ENCODE measurements at regions of chr6 and their contacts with region 1.

Region 1: GRCh38 chr6:56595490-56596122 is 47.1 kb downstream of the DST start:
- DNase-seq: peak in 1 of 2 experiments; percentile 52
- H3K4me3 ChIP-seq: no peak overlapping the region
- H3K27ac ChIP-seq: no peak overlapping the region
- H3K4me1 ChIP-seq: no peaks in the 10 kb centered on the region
- H3K27me3 ChIP-seq: no peaks in the 10 kb centered on the region
- CTCF ChIP-seq: peak in 2 of 3 experiments; percentile 42 to 62; a peak in 2 of 4 replicates
- EP300 ChIP-seq: no peak
- POLR2A ChIP-seq: no peak
- RAD21 ChIP-seq: peak; percentile 31 to 43; a peak in 3 of 4 replicates

Region 2: DNA sequence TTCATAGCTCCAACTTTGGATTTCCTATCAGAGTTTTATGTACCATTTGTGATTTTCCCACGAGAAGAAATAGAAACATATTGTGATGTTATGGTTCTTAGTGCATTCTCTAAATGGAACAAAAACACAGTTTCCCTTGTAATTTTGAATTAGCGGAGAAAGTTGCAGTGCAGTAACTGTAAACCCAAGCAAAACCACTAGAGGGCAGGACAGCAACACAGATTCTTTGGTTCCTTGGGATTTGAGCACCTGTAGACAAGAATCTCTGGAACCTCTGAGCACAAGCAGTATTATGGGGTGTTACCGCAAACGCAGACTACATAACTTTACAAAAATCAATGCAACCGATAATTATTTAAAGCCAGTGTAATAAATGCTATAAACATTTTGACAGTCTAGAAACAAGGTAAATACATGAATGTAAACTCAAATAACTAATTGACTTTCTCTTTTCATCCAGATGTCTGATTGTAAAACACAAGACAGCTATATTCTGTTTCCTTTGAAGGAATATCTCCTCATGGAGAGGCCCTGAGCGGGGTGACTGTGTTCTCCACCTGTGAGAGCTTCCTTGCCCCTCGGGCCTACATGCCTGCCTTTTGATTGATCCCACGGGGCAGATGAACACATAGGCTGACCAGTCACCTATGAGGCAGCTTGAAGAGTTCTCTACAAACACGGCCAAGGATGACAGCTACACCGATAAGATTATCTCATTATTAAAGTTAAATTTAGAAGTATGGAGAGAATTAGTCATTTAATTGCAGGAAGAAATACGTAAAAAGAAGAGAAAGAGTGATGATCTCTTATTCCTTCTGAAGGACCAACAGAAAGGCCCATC is 280.7 kb before region 1 on chr6:
- CTCF ChIA-PET with region 1: interaction called, 10 read pairs
- POLR2A ChIA-PET with region 1: no interaction called
- DNase-seq: peak in 1 of 2 experiments; percentile 68
- H3K4me3 ChIP-seq: no peak overlapping the region
- H3K27ac ChIP-seq: no peak overlapping the region
- H3K4me1 ChIP-seq: no peaks in the 10 kb centered on the region
- H3K27me3 ChIP-seq: no peaks in the 10 kb centered on the region
- CTCF ChIP-seq: peak in 2 of 3 experiments; percentile 74 to 79; a peak in 3 of 4 replicates
- EP300 ChIP-seq: no peak
- POLR2A ChIP-seq: no peak
- RAD21 ChIP-seq: peak; percentile 80 to 86

Region 3: GRCh38 chr6:56370561-56371211 is 224.9 kb before region 1 on chr6:
- CTCF ChIA-PET with region 1: interaction called, 10 read pairs
- POLR2A ChIA-PET with region 1: no interaction called
- DNase-seq: no peak
- H3K4me3 ChIP-seq: no peak overlapping the region
- H3K27ac ChIP-seq: no peak overlapping the region
- H3K4me1 ChIP-seq: no peaks in the 10 kb centered on the region; a peak in 1 of 7 replicates
- H3K27me3 ChIP-seq: no peaks in the 10 kb centered on the region
- CTCF ChIP-seq: no peak
- EP300 ChIP-seq: no peak
- POLR2A ChIP-seq: no peak
- RAD21 ChIP-seq: no peak

Region 4: GRCh38 chr6:56499095-56499494 is 96.5 kb before region 1 on chr6:
- CTCF ChIA-PET with region 1: no interaction called
- POLR2A ChIA-PET with region 1: no interaction called
- DNase-seq: no peak
- H3K4me3 ChIP-seq: no peak overlapping the region
- H3K27ac ChIP-seq: no peak overlapping the region
- H3K4me1 ChIP-seq: no peaks in the 10 kb centered on the region
- H3K27me3 ChIP-seq: no peaks in the 10 kb centered on the region
- CTCF ChIP-seq: no peak
- EP300 ChIP-seq: no peak
- POLR2A ChIP-seq: no peak
- RAD21 ChIP-seq: no peak

Region 5: DNA sequence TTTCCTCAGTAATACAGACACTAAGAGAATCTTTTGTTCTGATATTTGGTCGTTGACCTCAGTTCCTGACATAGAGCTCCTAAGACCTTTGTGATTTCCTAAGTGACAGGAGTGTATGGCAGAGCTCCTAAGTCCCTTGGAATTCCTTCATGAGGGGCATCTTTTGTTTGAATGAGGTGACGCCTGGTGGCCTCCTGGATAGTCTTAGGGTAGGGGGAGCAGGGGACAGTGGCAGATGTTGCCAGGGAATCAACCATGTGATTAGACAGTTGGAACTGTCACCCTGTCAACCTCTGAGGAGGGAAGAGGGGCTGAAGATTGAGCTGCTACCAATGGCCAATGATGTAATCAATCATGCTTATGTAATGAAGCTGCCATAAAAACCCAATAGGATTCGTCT is 19.9 kb before region 1 on chr6:
- CTCF ChIA-PET with region 1: interaction called, 48 read pairs
- POLR2A ChIA-PET with region 1: no interaction called
- DNase-seq: no peak
- H3K4me3 ChIP-seq: no peak overlapping the region
- H3K27ac ChIP-seq: no peak overlapping the region
- H3K4me1 ChIP-seq: no peaks in the 10 kb centered on the region
- H3K27me3 ChIP-seq: no peaks in the 10 kb centered on the region
- CTCF ChIP-seq: no peak
- EP300 ChIP-seq: no peak
- POLR2A ChIP-seq: no peak
- RAD21 ChIP-seq: no peak

Region 6: GRCh38 chr6:56607111-56607752 is 11.6 kb after region 1 on chr6:
- CTCF ChIA-PET with region 1: interaction called, 31 read pairs
- POLR2A ChIA-PET with region 1: no interaction called
- DNase-seq: no peak
- H3K4me3 ChIP-seq: no peak overlapping the region
- H3K27ac ChIP-seq: no peak overlapping the region
- H3K4me1 ChIP-seq: no peaks in the 10 kb centered on the region
- H3K27me3 ChIP-seq: no peaks in the 10 kb centered on the region
- CTCF ChIP-seq: no peak
- EP300 ChIP-seq: no peak
- POLR2A ChIP-seq: no peak
- RAD21 ChIP-seq: no peak

Region 7: GRCh38 chr6:56714982-56715456 is 119.4 kb after region 1 on chr6:
- CTCF ChIA-PET with region 1: no interaction called
- POLR2A ChIA-PET with region 1: no interaction called
- DNase-seq: peak in 1 of 2 experiments; percentile 31
- H3K4me3 ChIP-seq: no peak overlapping the region
- H3K27ac ChIP-seq: no peak overlapping the region
- H3K4me1 ChIP-seq: peaks cover 3 to 21% (median 15%) of the 10 kb centered on the region in 4 experiments
- H3K27me3 ChIP-seq: no peaks in the 10 kb centered on the region
- CTCF ChIP-seq: no peak
- EP300 ChIP-seq: no peak
- POLR2A ChIP-seq: no peak
- RAD21 ChIP-seq: no peak

Region 8: DNA sequence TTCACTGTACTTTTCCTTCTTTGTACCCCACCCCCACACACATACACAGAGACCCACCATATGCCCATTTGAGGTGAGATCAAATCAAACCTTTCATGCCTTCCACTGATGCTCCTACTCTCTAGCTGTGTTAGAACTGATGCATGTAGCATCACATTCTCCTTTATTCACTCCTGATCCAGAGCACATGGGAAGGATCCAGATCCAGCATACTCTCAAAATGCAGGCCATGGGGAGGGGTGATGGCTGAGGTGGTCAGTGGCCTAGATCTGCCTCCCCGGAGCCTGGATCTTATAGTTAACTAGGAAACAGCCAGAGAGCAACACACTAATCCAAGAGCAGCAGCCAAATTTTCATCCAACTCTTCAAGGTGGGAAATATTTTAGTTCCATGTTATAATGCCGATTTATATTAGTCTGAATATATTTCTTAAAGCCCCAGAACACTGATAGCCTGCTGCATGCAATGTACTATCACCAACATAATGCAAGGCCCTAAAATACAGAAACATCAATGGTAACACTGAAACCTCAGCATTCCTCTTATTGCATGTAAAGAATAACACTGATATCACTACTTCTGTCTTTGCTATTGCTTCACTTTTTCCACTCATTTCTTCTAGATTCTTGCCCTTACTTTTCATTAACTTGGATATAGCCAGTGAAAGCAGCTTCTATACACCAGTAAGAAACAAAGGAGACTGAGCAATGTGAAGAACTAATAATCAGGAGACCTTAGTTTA is 232.5 kb after region 1 on chr6:
- CTCF ChIA-PET with region 1: no interaction called
- POLR2A ChIA-PET with region 1: no interaction called
- DNase-seq: no peak
- H3K4me3 ChIP-seq: no peak overlapping the region
- H3K27ac ChIP-seq: no peak overlapping the region
- H3K4me1 ChIP-seq: peaks cover 0 to 9% (median 5%) of the 10 kb centered on the region in 4 experiments; a peak in 3 of 7 replicates
- H3K27me3 ChIP-seq: no peaks in the 10 kb centered on the region
- CTCF ChIP-seq: no peak
- EP300 ChIP-seq: no peak
- POLR2A ChIP-seq: no peak
- RAD21 ChIP-seq: no peak